ENCODE measurements at regions of chr2 and their contacts with region 1.

Region 1: DNA sequence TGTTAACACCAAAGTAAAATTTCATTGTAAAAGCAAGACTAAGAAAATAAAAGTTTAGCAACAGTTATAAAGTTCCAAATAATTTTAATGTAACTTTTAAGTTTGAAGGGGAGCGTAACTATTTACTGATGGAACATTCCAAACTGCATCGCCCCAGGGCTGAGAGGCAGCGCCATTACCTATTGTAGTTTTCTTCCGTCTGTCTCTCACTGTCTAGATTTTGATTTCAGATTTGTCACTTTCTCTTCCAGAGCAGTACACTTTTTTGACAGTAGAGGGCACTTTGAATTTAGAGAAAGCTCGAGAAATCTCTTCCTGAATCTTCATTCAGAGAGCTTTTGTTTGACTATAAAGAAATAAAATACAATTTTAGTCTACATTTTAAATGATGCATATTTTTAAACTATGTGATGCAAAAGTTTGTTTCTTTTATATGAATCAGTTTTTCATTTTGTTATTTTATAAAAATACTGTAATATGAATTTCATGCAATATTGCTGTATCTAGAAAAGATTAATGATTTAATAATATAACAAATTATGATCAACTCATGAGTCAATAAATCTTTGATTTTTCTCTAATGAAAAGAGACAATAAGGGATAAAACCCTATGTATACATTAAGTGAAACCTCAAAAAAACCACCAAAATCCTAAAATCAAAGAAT is 389.8 kb downstream of the FIGN start:
- DNase-seq: peak; percentile 59
- ATAC-seq: peak; percentile 66
- H3K4me3 ChIP-seq: no peak overlapping the region
- H3K27ac ChIP-seq: no peak overlapping the region
- H3K4me1 ChIP-seq: no peaks in the 10 kb centered on the region
- H3K27me3 ChIP-seq: no peaks in the 10 kb centered on the region
- CTCF ChIP-seq: peak; percentile 72
- EP300 ChIP-seq: no peak
- POLR2A ChIP-seq: no peak
- RAD21 ChIP-seq: peak; percentile 42; the same call in 1 of the 2 replicates

Region 2: DNA sequence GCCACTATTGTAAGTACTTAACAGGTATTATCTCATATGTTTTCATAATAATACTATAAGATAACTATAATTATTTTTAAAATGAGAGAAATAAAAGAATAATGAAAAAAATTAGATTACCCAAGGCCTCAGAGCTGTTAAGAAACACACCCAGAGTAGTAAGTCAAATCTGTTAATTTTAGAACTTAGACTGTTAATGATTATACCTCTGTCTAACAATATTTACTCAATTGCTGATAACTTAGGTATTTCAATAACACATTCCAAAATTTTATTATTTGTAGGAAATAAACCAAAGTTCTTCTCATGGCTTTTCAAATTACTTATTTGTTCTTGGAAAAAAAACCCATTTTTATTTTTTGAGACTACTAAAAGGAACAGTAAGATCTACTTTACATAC is 280.0 kb before region 1 on chr2:
- CTCF ChIA-PET with region 1: no interaction called
- POLR2A ChIA-PET with region 1: no interaction called
- in situ Hi-C with region 1: no loop called
- intact Hi-C with region 1: no loop called
- DNase-seq: no peak
- ATAC-seq: no peak
- H3K4me3 ChIP-seq: no peak overlapping the region
- H3K27ac ChIP-seq: no peak overlapping the region
- H3K4me1 ChIP-seq: no peaks in the 10 kb centered on the region
- H3K27me3 ChIP-seq: no peaks in the 10 kb centered on the region
- CTCF ChIP-seq: no peak
- EP300 ChIP-seq: no peak
- POLR2A ChIP-seq: no peak
- RAD21 ChIP-seq: no peak

Region 3: DNA sequence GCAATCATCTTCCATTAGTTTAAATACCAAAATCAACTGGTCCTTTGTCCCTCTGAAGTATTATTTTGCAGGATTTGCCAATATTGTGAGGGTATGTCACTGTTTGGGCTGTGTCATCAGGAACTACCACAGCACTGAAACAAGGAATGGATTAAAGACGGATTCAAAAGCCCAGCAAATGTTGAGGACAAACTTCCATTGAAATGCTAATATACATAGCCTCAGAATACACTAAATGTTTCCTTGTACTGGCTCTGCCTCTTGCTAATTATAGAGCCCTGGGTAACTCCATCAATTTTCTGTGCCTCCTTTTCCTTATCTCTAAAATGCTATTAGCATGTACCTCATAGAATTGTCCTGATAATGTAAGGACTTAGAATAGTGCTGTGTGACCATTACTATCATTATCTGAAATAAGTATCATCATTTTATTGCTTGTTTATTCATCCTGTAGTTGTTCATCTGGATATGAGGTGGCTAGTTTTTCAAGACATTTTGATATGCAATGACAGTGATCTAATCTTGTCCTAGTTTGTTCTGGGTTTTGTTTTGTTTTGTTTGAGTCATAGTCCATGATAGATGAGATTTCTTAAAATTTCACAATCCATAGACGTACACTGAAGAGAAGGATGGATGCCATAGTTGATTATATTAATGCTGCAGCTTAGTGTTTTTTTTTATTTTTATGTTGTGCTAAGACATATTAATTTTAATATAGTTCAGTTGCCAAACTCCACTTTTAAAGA is 174.1 kb before region 1 on chr2:
- CTCF ChIA-PET with region 1: no interaction called
- POLR2A ChIA-PET with region 1: no interaction called
- in situ Hi-C with region 1: no loop called
- intact Hi-C with region 1: loop called (anchors 1 kb)
- DNase-seq: no peak
- ATAC-seq: no peak
- H3K4me3 ChIP-seq: no peak overlapping the region
- H3K27ac ChIP-seq: no peak overlapping the region
- H3K4me1 ChIP-seq: no peaks in the 10 kb centered on the region
- H3K27me3 ChIP-seq: no peaks in the 10 kb centered on the region
- CTCF ChIP-seq: no peak
- EP300 ChIP-seq: no peak
- POLR2A ChIP-seq: no peak
- RAD21 ChIP-seq: no peak

Region 4: GRCh38 chr2:163471947-163472346 is 125.9 kb after region 1 on chr2:
- CTCF ChIA-PET with region 1: no interaction called
- POLR2A ChIA-PET with region 1: no interaction called
- in situ Hi-C with region 1: no loop called
- intact Hi-C with region 1: loop called (anchors 1 kb)
- DNase-seq: peak; percentile 3
- ATAC-seq: peak; percentile 50
- H3K4me3 ChIP-seq: no peak overlapping the region
- H3K27ac ChIP-seq: no peak overlapping the region
- H3K4me1 ChIP-seq: peaks cover 16% of the 10 kb centered on the region; the same call in 1 of the 2 replicates
- H3K27me3 ChIP-seq: no peaks in the 10 kb centered on the region
- CTCF ChIP-seq: peak; percentile 59
- EP300 ChIP-seq: no peak
- POLR2A ChIP-seq: no peak
- RAD21 ChIP-seq: 0 out of 2 replicates have a peak, but pooled peaks have one; percentile 11

Region 5: DNA sequence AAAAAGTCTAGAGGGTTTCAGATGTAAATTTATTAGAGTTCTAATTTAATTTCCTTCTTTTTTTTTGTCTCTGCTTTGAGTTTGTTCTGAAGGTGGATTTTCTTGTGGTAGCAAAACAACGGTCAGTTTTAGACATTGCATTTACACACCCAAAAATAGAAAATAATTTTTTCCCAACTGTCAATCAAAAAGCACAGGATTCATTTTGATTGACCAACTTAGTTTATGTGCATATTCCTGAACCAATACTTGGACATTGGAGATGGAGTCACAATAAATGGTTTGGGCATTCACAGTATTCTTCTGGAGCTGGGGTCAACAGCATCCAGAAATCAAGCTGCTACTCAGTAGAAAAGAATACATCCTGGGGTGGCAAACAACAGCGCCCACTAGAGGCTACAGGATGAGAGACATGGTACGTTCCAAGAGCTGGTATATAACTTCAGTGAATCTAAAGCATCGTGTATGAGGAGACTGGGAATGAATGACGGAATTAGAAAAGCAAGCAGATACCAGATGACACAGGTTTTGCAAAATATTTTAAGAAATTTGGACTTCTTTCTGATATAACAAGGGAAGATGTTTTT is 532.6 kb after region 1 on chr2:
- CTCF ChIA-PET with region 1: interaction called, 11 read pairs
- POLR2A ChIA-PET with region 1: no interaction called
- in situ Hi-C with region 1: loop called (anchors 10 kb)
- intact Hi-C with region 1: loop called (anchors 1 kb)
- DNase-seq: peak; percentile 59
- ATAC-seq: peak; percentile 94
- H3K4me3 ChIP-seq: no peak overlapping the region
- H3K27ac ChIP-seq: no peak overlapping the region
- H3K4me1 ChIP-seq: no peaks in the 10 kb centered on the region
- H3K27me3 ChIP-seq: no peaks in the 10 kb centered on the region
- CTCF ChIP-seq: peak; percentile 77
- EP300 ChIP-seq: no peak
- POLR2A ChIP-seq: no peak
- RAD21 ChIP-seq: peak; percentile 58

Region 6: DNA sequence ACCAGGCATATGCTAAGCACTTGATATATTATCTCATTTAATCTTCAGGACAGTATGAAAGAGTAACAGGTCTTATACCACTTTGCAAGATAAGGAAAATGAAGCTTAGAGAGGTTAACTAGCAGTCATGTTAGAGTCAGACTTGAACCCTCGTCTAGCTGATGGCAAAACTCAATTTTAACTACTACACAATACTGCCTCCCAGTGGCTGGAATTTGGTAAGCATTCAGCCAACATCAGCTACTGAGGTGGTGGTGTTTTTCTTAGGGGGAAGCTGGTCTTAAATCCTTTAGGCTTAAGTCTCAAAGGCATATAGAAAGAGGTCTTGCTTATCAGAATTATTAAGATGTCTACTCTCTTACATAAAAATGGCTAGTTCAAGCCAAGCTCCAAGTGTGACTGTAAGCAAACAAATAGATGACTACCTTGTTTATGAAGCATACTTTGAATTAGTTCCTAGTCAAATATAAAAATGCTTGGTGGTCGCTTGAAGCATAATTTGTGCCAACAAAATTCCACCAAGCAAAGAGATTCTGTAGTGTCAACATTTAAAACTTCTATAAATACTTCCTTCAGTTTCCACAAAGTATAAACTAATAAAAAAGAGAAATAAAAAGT is 715.2 kb after region 1 on chr2:
- CTCF ChIA-PET with region 1: interaction called, 11 read pairs
- POLR2A ChIA-PET with region 1: no interaction called
- in situ Hi-C with region 1: loop called (anchors 5 kb)
- intact Hi-C with region 1: loop called (anchors 1 kb)
- DNase-seq: peak; percentile 53
- ATAC-seq: peak; percentile 78
- H3K4me3 ChIP-seq: no peak overlapping the region
- H3K27ac ChIP-seq: no peak overlapping the region
- H3K4me1 ChIP-seq: no peaks in the 10 kb centered on the region
- H3K27me3 ChIP-seq: no peaks in the 10 kb centered on the region
- CTCF ChIP-seq: peak; percentile 82
- EP300 ChIP-seq: no peak
- POLR2A ChIP-seq: no peak
- RAD21 ChIP-seq: peak; percentile 74

Measured in HepG2 (cell line).